ENCODE measurements at regions of chr5 and their contacts with region 1.

Region 1: GRCh38 chr5:76041863-76042262 is 41.3 kb upstream of the SV2C start:
- DNase-seq: no peak
- H3K4me3 ChIP-seq: no peak overlapping the region
- H3K27ac ChIP-seq: no peak overlapping the region
- H3K4me1 ChIP-seq: no peaks in the 10 kb centered on the region
- H3K27me3 ChIP-seq: no peaks in the 10 kb centered on the region
- CTCF ChIP-seq: no peak
- POLR2A ChIP-seq: no peak

Region 2: GRCh38 chr5:74357827-74358226 is 1684.0 kb before region 1 on chr5:
- intact Hi-C with region 1: loop called (anchors 10 kb)
- DNase-seq: no peak
- H3K4me3 ChIP-seq: no peak overlapping the region
- H3K27ac ChIP-seq: no peak overlapping the region
- H3K4me1 ChIP-seq: peaks cover 0 to 13% of the 10 kb centered on the region in 2 donors
- H3K27me3 ChIP-seq: no peaks in the 10 kb centered on the region
- CTCF ChIP-seq: no peak
- POLR2A ChIP-seq: no peak

Region 3: DNA sequence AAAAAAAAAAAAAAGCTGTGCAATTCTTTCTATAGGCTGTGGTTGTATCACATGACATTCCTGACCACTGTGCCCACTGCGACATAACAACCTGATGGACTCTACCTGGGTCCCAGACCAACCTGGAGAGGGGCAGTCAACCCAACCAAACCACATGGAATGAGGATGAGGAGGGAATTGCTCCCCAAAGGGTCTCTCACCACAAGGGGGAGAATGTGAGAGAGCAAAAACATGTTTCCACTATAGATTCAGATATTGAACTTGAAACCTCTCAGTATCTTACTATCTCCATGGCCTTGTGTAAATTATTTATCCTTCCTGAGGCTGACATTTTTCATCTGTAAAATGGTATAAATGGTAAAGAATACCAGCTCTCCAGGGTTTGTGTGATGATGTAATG is 25.6 kb before region 1 on chr5:
- intact Hi-C with region 1: no loop called
- DNase-seq: no peak
- H3K4me3 ChIP-seq: no peak overlapping the region
- H3K27ac ChIP-seq: no peak overlapping the region
- H3K4me1 ChIP-seq: no peaks in the 10 kb centered on the region
- H3K27me3 ChIP-seq: no peaks in the 10 kb centered on the region
- CTCF ChIP-seq: no peak
- POLR2A ChIP-seq: no peak

Measured in breast epithelium (tissue), 4 donors.